ENCODE measurements at regions of chr12 and their contacts with region 1.

Region 1: DNA sequence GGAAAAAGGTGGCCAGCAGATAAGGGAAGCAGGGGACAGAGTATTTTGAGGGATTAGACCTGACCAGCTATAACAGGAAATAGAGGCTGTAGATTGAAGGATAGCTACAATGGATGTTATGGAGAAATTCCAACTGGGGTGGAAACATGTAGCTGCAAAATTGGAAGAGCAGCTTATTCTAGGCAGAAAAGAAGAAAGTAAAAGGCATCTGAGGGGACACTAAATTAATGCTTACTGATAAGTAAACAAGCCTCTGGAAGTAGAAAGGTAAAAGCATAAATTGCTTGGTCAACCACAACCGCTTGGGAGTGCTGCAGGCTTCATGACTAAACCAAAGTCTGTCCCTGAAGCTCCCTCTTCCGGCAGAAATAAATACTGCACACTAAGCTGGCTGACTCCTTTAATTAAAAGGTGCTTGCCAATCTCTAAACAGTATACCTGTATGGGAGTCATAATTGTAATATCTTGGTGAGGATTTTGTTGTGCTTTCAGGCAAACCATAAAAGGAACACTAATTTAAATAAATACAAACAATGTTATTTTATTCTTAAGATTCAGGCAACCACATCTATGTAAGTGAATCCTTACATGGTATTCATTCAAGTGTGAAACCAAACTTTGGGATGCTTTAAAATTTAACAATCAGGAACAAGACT is 7.7 kb downstream of the UBC start:
- DNase-seq: peak; percentile 46 to 97 (median 85)
- H3K4me3 ChIP-seq: peak overlapping the region in 1 of 59 donors; percentile 15
- H3K27ac ChIP-seq: peak overlapping the region in 54 of 59 donors; percentile 1 to 85 (median 72)
- H3K27me3 ChIP-seq: no peaks in the 10 kb centered on the region
- CTCF ChIP-seq: peak; percentile 96 to 100 (median 99)

Region 2: GRCh38 chr12:124044809-124045321 is 861.9 kb before region 1 on chr12:
- intact Hi-C with region 1: loop called in 1 of 2 experiments (anchors 10 kb)
- DNase-seq: peak in 1 of 10 donors; percentile 59
- H3K4me3 ChIP-seq: no peak overlapping the region
- H3K27ac ChIP-seq: peak overlapping the region in 20 of 59 donors; percentile 76 to 95 (median 90)
- H3K27me3 ChIP-seq: no peaks in the 10 kb centered on the region
- CTCF ChIP-seq: no peak

Region 3: DNA sequence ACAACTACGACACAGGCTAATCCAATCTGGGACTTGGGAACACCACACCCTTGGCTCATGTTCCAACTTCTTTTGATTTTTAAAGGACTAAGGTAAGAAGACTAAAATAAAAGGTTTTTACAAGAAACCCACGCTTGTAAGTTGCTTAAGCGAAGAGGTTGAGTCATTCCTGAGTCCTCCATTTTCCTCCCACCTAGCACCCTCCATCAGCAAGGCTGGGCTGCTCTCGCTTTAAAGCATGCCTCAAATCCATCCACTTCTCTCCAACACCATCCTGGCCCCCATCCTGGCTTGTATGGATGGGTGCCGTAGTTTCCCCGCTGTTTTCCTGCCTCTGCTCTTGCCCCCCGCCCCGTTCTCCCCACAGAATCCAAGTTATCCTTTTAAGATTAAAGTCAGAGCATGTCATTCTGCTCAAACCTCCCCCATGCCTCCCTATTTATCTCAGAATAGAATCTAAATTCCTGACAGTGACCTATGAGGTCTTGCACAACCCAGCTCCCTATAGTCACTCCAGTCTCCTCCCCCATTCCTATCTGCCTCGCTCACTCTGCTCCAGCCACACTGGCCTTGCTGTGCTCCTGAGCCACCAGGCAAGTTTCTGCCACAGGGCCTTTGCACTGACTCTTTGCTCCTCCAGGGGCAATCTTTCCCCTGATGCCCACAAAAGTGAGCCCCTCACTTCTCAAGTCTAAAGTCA is 77.6 kb before region 1 on chr12:
- intact Hi-C with region 1: no loop called
- DNase-seq: peak in 3 of 10 donors; percentile 36 to 63 (median 50)
- H3K4me3 ChIP-seq: no peak overlapping the region
- H3K27ac ChIP-seq: peak overlapping the region in 54 of 59 donors; percentile 5 to 88 (median 66)
- H3K27me3 ChIP-seq: no peaks in the 10 kb centered on the region
- CTCF ChIP-seq: no peak

Region 4: DNA sequence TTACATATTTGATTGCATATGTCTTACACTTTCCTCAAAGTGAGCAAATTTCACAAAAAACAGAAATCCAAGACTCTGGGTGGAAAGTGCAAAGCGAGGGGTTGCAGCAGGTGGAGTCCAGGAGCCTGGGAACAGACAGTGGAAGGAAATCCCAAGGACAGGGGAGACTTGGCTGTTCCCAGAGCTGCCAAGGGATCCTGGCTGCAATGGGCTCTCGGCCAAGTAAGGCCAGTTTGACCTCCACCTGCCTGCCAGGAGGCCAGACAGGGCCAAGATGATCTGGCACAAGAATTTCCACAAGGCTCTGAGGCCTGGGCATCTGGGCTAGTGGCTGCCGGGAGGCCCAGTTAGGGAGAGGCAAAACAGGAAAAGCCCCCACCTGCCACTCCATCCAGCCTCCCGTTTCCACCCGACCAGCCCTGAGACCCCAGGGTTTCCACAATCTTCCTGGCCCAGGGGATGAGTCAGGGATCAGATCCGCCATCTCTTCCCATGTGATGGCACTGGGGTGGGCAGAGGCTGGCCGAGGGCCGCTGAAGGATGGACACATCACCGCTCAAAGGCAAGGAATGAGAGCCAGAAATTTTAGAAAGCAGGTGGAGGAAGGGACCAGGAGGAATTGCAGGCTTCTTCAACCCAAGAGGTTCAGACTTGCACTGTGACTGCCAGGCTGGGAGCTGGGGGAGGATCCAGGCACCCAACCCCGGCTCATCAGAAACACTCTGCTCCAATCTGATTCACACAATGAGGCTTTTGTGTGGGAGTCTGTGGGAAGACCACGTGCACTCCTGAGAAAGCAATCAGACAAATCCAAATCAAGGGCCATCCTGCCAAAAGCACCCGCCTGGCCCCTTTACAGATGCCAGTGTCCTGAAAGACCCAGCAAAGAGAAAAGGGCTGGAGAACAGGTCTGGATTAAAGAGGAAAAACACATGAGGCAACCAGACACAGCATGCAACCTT is 59.3 kb before region 1 on chr12:
- intact Hi-C with region 1: loop called in 1 of 2 experiments (anchors 5 kb)
- DNase-seq: peak; percentile 64 to 94 (median 90)
- H3K4me3 ChIP-seq: peak overlapping the region in 34 of 59 donors; percentile 2 to 47 (median 22)
- H3K27ac ChIP-seq: peak overlapping the region; percentile 60 to 97 (median 90)
- H3K27me3 ChIP-seq: no peaks in the 10 kb centered on the region
- CTCF ChIP-seq: peak in 8 of 56 donors; percentile 6 to 24 (median 16)

Region 5: DNA sequence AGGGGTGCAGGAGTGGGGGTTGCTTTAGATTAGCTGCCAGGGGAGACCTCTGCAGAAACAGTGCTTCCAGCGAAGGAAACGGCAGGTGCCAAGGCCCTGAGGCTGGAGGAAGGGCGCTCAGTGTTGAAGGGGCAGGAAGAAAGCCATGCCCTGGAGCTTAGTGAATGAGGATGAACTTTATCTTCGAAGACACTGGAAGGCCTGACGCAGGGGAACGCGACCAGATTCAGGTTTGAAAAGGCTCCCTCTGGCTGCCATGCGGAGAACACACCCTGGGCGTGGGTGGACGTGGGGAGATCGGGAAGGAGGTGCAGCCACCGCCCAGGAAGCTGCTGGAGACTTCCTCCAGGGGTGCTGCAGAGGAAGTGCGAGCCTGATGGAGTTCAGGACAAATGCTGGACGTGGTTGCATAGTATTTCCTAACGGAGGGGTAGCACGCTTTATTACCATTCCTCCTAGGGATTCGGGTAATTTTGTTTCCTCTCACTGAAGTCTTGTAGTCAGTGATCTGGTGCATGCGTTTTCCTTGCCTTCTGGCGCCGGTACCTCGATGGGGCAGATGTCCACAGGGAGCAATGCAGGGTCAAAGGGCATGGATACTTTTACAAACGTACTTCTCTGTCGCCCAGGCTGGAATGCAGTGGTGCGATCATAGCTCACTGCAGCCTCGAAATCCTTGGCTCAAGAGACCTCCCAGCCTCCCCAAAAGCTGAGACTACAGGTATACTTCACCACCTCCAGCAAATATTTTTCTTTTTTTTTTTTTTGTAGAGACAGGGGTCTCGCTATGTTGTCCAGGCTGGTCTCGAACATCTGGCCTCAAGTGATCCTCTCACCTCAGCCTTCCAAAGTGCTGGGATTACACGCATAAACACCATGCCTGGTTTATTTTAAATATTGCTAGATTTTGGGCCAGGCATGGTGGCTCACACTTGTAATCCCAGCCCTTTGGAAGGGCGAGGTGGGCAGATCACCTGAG is 34.1 kb after region 1 on chr12:
- intact Hi-C with region 1: loop called in 1 of 2 experiments (anchors 2 kb)
- DNase-seq: peak; percentile 71 to 93 (median 88)
- H3K4me3 ChIP-seq: peak overlapping the region; percentile 29 to 76 (median 61)
- H3K27ac ChIP-seq: peak overlapping the region; percentile 91 to 100 (median 99)
- H3K27me3 ChIP-seq: no peaks in the 10 kb centered on the region
- CTCF ChIP-seq: peak; percentile 67 to 97 (median 91)

Measured in dorsolateral prefrontal cortex (tissue), 120 donors.